Adrenal gland (tissue), 19 donors: ENCODE measurements at regions of chr4 and their contacts with region 1.

Region 1: GRCh38 chr4:138090150-138090917 is 151.8 kb downstream of the SLC7A11 start:
- DNase-seq: peak; percentile 29 to 77 (median 57)
- H3K4me3 ChIP-seq: no peak overlapping the region
- H3K27ac ChIP-seq: no peak overlapping the region
- H3K4me1 ChIP-seq: no peaks in the 10 kb centered on the region
- H3K27me3 ChIP-seq: no peaks in the 10 kb centered on the region
- CTCF ChIP-seq: peak; percentile 65 to 90 (median 71)
- POLR2A ChIP-seq: no peak

Region 2: DNA sequence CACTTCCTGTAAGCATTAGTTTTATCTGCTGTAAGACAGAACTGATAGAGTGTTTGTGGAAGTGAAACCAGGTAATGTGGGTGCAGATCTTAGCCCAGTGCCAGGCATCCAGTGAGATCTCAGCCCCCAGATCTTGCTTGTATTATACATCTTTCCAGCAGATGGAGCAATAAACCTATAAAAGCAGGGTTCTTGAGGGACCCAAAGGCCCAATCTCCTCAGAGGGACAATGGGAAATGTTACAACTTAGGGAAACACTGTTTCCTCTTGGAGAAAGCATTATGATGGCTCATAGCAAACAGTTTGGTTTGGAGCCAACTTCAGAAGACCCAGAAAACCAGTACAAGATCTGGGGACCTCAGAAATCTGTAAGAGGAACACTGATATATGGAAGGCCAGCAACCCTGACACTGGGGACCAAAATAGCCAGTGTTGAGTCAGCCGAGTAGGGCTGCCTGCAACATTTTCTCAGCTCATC is 54.5 kb before region 1 on chr4:
- intact Hi-C with region 1: loop called (anchors 2 to 10 kb)
- DNase-seq: peak in 2 of 7 donors; percentile 9 to 19
- H3K4me3 ChIP-seq: no peak overlapping the region
- H3K27ac ChIP-seq: no peak overlapping the region
- H3K4me1 ChIP-seq: no peaks in the 10 kb centered on the region
- H3K27me3 ChIP-seq: no peaks in the 10 kb centered on the region
- CTCF ChIP-seq: peak; percentile 30 to 69 (median 58)
- POLR2A ChIP-seq: no peak

Region 3: DNA sequence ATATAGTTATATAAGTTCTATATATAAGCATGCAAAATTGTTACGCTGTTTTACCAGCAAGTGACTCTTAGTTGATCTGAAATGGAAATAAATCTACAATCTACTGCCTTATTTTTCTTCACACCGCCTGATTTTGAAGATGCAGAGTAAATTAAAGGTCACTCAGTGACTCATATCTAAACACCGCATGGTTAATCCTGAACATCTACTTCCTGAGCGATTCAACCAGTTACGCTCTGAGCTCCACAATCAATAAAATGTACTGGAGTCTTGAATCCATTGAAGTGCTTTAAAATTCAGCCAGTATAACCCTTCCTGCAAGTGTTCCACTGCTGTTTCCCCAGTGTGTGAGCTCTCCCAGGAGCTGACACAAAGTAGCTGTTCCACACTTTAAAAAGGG is 41.0 kb before region 1 on chr4:
- intact Hi-C with region 1: loop called in 1 of 2 experiments (anchors 10 kb)
- DNase-seq: no peak
- H3K4me3 ChIP-seq: no peak overlapping the region
- H3K27ac ChIP-seq: no peak overlapping the region
- H3K4me1 ChIP-seq: no peaks in the 10 kb centered on the region
- H3K27me3 ChIP-seq: no peaks in the 10 kb centered on the region
- CTCF ChIP-seq: no peak
- POLR2A ChIP-seq: no peak

Region 4: DNA sequence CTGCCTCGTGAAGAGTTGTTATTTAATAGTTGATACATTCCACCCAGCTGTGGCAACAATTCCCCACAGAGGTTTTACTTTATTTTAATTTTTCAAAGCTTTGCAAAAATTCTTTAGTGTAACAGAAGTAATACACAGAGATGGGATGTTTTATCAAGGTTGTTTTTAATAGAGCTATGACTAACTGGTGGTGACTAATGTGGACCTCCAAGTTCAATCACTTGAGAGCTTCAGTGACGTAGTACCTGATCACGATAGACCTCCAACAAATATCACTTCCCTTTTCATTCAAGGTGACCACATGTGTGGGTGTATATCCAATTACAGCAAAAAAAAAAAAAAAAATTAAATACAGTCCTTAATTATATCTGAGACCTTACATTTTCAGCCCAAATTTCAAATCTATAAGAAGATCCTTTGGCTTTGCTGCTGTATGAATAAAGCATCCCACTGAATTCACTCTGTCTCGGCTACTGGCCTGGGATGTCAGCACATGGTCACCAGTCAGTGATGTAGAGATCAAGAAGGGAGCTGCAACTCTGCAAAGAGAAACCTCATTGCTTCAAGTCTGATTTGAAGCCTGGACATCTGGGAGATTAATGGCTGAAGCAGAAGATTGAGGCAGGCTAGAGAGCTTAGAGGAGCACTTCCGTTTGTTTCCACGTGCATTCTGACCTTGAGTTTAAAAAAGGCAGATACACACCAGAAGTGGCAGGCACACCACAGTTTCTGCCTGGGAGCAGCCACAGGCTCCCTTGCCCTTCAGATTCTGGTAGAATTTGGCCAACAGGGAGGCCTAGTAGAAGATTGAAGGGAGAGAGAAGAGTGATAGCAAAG is 579.4 kb after region 1 on chr4:
- intact Hi-C with region 1: loop called in 1 of 2 experiments (anchors 10 kb)
- DNase-seq: no peak
- H3K4me3 ChIP-seq: no peak overlapping the region
- H3K27ac ChIP-seq: no peak overlapping the region
- H3K4me1 ChIP-seq: peaks cover 0 to 6% of the 10 kb centered on the region in 2 donors
- H3K27me3 ChIP-seq: no peaks in the 10 kb centered on the region
- CTCF ChIP-seq: no peak
- POLR2A ChIP-seq: no peak